CD8-positive, alpha-beta memory T cell (primary cell): ENCODE measurements at regions of chr13 and their contacts with region 1.

Region 1: DNA sequence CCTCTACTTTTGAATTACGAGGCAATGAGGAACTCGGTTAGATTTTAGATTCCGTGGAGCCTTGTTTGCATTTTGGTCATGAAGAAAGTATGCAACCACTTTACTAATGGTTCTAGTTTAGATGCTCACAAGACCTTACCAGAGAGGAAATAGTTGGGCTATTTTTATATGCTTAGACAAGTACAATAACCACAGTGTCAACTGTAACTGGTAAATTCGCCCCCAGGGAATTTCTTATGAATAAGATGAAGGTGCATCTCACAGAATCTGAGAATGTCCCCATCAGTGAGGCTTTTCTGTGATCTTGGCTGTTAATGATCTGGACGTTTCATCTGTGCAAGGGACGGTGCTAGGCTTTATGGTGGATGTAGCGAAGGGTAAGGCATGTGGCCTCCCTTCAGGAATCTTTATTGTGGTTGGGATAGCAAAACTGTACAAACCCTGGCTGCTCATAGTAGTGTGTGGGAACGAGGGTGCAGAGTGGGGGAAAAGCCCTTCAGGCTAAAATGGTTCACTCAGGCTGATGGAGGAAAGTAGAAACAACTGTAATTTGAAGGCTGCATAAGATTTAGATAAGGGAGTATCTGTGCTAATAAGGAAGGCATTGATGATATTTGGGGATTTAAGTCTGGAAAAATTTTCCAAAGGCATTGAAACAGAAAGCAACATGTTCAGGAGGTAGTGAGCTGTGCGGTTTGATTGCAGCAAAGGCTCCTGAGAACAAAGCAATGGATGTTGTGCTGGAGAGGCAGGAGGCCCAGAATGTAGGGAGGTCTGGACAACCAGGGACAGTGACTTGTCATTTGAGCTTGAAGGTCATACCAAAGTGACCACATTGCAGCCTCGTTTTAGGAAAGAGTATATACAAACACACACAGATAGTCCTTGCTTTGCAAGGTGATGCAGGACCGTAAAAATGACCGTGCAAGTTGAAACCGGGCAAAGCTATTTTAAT is 28.4 kb downstream of the UBAC2 start:
- DNase-seq: peak in 1 of 5 donors; percentile 42
- H3K4me3 ChIP-seq: peak overlapping the region; percentile 23
- H3K4me3 Mint-ChIP-seq: peak overlapping the region; percentile 71 to 91 (median 80)
- H3K27ac ChIP-seq: no peak overlapping the region
- H3K27ac Mint-ChIP-seq: peak overlapping the region; percentile 83 to 97 (median 93)
- H3K4me1 ChIP-seq: peaks cover 77% of the 10 kb centered on the region
- H3K4me1 Mint-ChIP-seq: peaks cover 74 to 92% (median 86%) of the 10 kb centered on the region in 3 donors
- H3K27me3 ChIP-seq: no peaks in the 10 kb centered on the region
- H3K27me3 Mint-ChIP-seq: no peaks in the 10 kb centered on the region

Region 2: GRCh38 chr13:99214232-99214631 is 14.8 kb before region 1 on chr13:
- CTCF ChIA-PET with region 1: interaction called, 11 read pairs
- POLR2A ChIA-PET with region 1: interaction called, 20 read pairs
- DNase-seq: peak in 1 of 5 donors; percentile 63
- H3K4me3 ChIP-seq: peak overlapping the region; percentile 34
- H3K4me3 Mint-ChIP-seq: peak overlapping the region; percentile 35 to 98 (median 94)
- H3K27ac ChIP-seq: no peak overlapping the region
- H3K27ac Mint-ChIP-seq: peak overlapping the region; percentile 97 to 100 (median 98)
- H3K4me1 ChIP-seq: peaks cover 81% of the 10 kb centered on the region
- H3K4me1 Mint-ChIP-seq: peaks cover 68 to 90% (median 87%) of the 10 kb centered on the region in 3 donors
- H3K27me3 ChIP-seq: no peaks in the 10 kb centered on the region
- H3K27me3 Mint-ChIP-seq: no peaks in the 10 kb centered on the region